Calu3 (cell line): ENCODE measurements at regions of chr18 and their contacts with region 1.

Region 1: DNA sequence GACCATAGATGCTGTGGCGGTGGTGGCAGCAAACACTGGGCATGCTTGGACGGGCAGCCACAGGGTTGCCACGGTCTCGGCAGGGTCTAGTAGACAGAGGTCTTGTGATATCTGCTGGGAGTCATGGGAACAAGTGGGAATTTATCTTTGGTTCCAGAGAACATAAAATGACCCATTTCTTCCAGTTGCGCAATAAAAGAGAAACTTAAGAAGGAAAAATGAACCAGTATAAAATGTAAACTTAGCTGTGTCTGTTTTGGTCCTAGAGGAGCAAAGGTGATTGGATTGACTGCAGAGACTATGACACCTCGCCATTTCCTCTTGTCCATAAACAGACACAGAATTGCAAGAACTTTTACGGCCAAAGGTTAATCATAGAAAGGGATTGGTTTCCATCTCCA is 132.6 kb upstream of the RBBP8 start:
- DNase-seq: no peak
- H3K4me3 Mint-ChIP-seq: no peak overlapping the region
- H3K27ac Mint-ChIP-seq: no peak overlapping the region
- H3K4me1 Mint-ChIP-seq: peaks cover 6% of the 10 kb centered on the region
- H3K27me3 Mint-ChIP-seq: no peaks in the 10 kb centered on the region
- CTCF ChIP-seq: no peak

Region 2: GRCh38 chr18:22585821-22586220 is 214.7 kb before region 1 on chr18:
- CTCF ChIA-PET with region 1: no interaction called
- intact Hi-C with region 1: loop called (anchors 5 kb)
- DNase-seq: no peak
- H3K4me3 Mint-ChIP-seq: no peak overlapping the region
- H3K27ac Mint-ChIP-seq: no peak overlapping the region
- H3K4me1 Mint-ChIP-seq: peaks cover 14% of the 10 kb centered on the region
- H3K27me3 Mint-ChIP-seq: no peaks in the 10 kb centered on the region
- CTCF ChIP-seq: no peak